Heart left ventricle (tissue), 16 donors: ENCODE measurements at regions of chr2 and their contacts with region 1.

Region 1: GRCh38 chr2:108583903-108584520 is 49.7 kb downstream of the LIMS1 start:
- DNase-seq: peak in 4 of 5 donors; percentile 50 to 74 (median 66)
- ATAC-seq: peak; percentile 71 to 80 (median 78)
- H3K4me3 ChIP-seq: no peak overlapping the region
- H3K27ac ChIP-seq: peak overlapping the region in 4 of 12 donors; percentile 9 to 51 (median 18)
- H3K4me1 ChIP-seq: peaks cover 3 to 68% (median 44%) of the 10 kb centered on the region in 12 donors
- H3K27me3 ChIP-seq: no peaks in the 10 kb centered on the region
- CTCF ChIP-seq: peak; percentile 65 to 92 (median 77)
- POLR2A ChIP-seq: no peak

Region 2: DNA sequence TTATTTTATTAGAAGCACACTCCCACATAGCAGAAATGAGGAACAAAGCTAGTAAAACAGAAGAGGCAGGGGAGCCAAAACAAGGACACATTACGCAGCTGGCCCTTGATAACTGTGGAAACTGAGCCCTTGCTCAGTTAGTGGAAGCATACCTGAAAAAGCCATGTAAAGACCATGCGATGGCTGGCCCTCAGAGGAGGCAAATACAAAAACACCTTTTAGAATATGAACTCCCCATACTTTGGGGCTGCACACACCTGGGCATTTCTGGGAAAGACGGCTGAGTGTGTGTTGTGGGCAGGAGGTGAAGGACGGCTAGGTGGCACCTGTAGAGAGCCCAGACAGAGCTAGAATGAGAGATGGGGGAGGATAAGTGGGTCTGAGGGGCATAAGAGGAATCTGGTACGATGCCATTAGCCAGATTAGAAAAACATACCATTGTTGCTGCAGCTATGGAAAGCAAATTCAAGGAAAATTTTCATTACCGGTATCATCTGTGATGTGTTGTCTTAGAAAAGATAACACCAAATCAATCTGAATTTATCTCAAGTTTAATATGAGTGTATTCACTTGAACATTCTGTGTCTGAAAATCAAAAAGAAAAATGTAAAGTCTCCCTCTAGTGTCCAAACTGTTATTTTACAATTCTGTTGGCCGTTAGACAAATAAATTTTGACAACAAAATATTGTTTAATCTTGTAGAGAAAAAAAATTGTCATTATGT is 389.4 kb before region 1 on chr2:
- intact Hi-C with region 1: loop called in 1 of 10 experiments (anchors 10 kb)
- DNase-seq: no peak
- ATAC-seq: no peak
- H3K4me3 ChIP-seq: no peak overlapping the region
- H3K27ac ChIP-seq: no peak overlapping the region
- H3K4me1 ChIP-seq: no peaks in the 10 kb centered on the region
- H3K27me3 ChIP-seq: no peaks in the 10 kb centered on the region
- CTCF ChIP-seq: peak; percentile 21 to 70 (median 42)
- POLR2A ChIP-seq: no peak

Region 3: GRCh38 chr2:108351889-108352288 is 232.1 kb before region 1 on chr2:
- intact Hi-C with region 1: loop called (anchors 1 to 10 kb)
- DNase-seq: no peak
- ATAC-seq: no peak
- H3K4me3 ChIP-seq: no peak overlapping the region
- H3K27ac ChIP-seq: no peak overlapping the region
- H3K4me1 ChIP-seq: no peaks in the 10 kb centered on the region
- H3K27me3 ChIP-seq: peaks cover 0 to 8% (median 0%) of the 10 kb centered on the region in 9 donors
- CTCF ChIP-seq: no peak
- POLR2A ChIP-seq: no peak

Region 4: GRCh38 chr2:108448678-108449493 is 135.1 kb before region 1 on chr2 and contains the start of gene GCC2:
- intact Hi-C with region 1: loop called in 4 of 10 experiments (anchors 5 to 10 kb)
- DNase-seq: peak; percentile 94 to 97 (median 95)
- ATAC-seq: peak; percentile 99 to 100 (median 100)
- H3K4me3 ChIP-seq: peak within 1 kb of the TSS; percentile 65 to 99 (median 82)
- H3K27ac ChIP-seq: peak within 1 kb of the TSS; percentile 79 to 91 (median 85)
- H3K4me1 ChIP-seq: peaks cover 0 to 22% (median 9%) of the 10 kb centered on the region in 12 donors
- H3K27me3 ChIP-seq: no peaks in the 10 kb centered on the region
- CTCF ChIP-seq: no peak
- POLR2A ChIP-seq: peak in 1 of 2 donors; percentile 83
- total RNA-seq, gene GCC2: 11.9 to 39.5 (median 25.1) TPM

Region 5: DNA sequence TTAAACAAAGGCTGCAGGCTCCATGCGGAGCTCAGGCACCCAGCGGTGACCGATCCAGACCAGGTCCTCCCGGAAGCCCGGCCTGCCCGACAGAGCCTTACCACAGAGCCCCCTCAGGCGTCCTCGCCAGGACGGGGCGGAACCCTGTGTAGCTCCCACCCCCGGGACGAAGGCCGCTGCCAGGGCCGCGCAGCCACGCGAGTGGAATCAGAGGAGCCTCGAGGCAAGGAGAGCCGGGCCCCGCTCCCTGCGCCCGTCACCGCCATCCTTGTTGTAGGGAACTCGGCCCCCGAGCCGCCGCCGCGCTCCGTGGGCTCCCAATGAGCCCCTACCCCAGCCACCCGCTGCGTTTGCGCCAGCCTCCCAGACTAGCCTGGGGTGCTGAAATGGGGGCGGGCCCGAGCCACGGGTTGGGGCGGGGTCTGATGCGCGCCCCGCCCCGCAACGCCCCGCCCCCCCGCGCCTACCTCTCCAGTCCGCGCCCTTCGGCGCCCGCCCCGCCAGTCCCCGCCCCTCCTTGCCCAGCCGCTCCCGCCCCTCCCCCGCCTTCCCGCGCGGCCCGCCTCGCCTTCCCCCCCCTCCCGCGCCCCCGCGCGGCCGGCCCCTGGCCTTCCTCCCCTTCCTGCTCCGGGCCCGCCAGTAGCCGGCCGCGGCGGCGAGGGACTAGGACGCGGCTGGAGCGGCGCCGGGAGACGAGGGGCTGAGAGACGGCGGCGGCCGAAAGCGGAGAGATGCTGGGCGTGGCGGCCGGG is 50.0 kb before region 1 on chr2 and contains the start of gene LIMS1:
- intact Hi-C with region 1: loop called (anchors 2 to 10 kb)
- DNase-seq: peak; percentile 94 to 96 (median 95)
- ATAC-seq: peak; percentile 88 to 98 (median 98)
- H3K4me3 ChIP-seq: peak within 1 kb of the TSS; percentile 50 to 98 (median 77)
- H3K27ac ChIP-seq: peak within 1 kb of the TSS; percentile 58 to 94 (median 91)
- H3K4me1 ChIP-seq: peaks cover 0 to 31% (median 15%) of the 10 kb centered on the region in 12 donors
- H3K27me3 ChIP-seq: no peaks in the 10 kb centered on the region
- CTCF ChIP-seq: peak in 3 of 12 donors; percentile 14 to 27 (median 23)
- POLR2A ChIP-seq: peak; percentile 34 to 73
- total RNA-seq, gene LIMS1: 65.8 to 136 (median 82.3) TPM

Region 6: DNA sequence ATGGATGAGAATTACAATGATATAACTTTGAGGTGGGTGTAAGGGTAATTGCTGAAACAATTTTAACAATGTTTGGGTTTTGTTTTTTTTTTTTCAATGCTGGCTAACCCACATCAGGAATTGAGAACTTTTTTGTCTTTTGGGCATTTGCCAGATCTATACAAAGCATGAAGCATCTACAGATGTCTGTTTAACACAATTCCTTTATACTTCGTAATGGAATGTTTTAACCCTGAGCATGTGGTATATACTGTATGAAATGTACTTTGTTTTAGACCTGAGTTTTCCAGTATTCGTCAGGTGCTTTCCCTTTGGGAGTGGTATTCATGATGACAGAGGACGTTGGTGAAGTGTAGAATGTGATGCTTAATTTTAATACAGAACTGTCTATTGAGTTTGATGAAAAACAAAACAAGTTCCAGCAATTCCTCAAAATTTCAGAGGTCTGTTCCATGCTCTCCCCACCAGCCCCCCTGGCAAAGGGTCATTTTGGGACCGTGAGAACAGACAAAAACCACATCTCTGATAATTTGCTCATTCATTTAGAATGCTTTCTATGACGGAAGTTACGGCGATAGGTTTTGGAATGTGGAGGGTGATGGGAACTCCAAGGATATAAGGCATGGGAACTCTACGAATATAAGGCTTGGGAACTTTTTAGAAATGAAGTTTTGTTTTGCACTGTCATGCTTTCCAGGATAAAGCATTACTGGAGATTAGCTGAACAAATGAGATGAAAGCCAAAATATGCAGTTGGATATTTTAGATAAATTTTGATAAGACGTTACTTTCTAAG is 35.6 kb before region 1 on chr2:
- intact Hi-C with region 1: no loop called
- DNase-seq: no peak
- ATAC-seq: no peak
- H3K4me3 ChIP-seq: no peak overlapping the region
- H3K27ac ChIP-seq: no peak overlapping the region
- H3K4me1 ChIP-seq: peaks cover 3 to 30% (median 13%) of the 10 kb centered on the region in 12 donors
- H3K27me3 ChIP-seq: no peaks in the 10 kb centered on the region
- CTCF ChIP-seq: no peak
- POLR2A ChIP-seq: no peak

Region 7: DNA sequence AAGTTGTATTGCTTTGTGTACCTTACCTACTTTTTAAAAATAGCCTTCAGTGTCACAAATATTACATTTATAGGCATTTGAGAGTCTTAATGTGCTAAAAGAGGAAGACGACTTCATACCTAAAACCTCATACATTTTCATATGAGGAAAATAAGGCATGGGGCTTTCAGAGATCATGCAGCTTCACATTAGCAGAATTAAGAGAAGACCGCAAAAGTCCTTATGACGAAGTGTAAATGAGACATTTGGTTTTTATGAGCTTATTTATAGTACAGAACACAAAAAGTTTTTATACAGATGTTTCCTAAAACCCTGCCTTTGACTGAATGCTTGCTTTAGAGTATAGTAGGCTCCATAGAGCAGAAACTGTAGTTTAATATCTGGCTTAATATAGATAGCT is 192.5 kb after region 1 on chr2:
- intact Hi-C with region 1: no loop called
- DNase-seq: no peak
- ATAC-seq: no peak
- H3K4me3 ChIP-seq: no peak overlapping the region
- H3K27ac ChIP-seq: no peak overlapping the region
- H3K4me1 ChIP-seq: no peaks in the 10 kb centered on the region
- H3K27me3 ChIP-seq: no peaks in the 10 kb centered on the region
- CTCF ChIP-seq: no peak
- POLR2A ChIP-seq: no peak